ENCODE measurements at regions of chr2 and their contacts with region 1.

Region 1: GRCh38 chr2:14903709-14904374 is 271.3 kb downstream of the LRATD1 start:
- DNase-seq: peak; percentile 72
- ATAC-seq: peak; percentile 99
- H3K4me3 ChIP-seq: no peak overlapping the region
- H3K27ac ChIP-seq: no peak overlapping the region
- H3K4me1 ChIP-seq: no peaks in the 10 kb centered on the region
- H3K27me3 ChIP-seq: no peaks in the 10 kb centered on the region; a peak in 1 of 5 replicates
- CTCF ChIP-seq: peak; percentile 87
- EP300 ChIP-seq: no peak
- POLR2A ChIP-seq: no peak
- RAD21 ChIP-seq: peak; percentile 89

Region 2: GRCh38 chr2:14634201-14634884 is 269.5 kb before region 1 on chr2:
- CTCF ChIA-PET with region 1: no interaction called
- POLR2A ChIA-PET with region 1: no interaction called
- in situ Hi-C with region 1: no loop called
- intact Hi-C with region 1: loop called (anchors 10 kb)
- DNase-seq: peak; percentile 11
- ATAC-seq: peak; percentile 74
- H3K4me3 ChIP-seq: peak overlapping the region in 1 of 3 experiments; percentile 1; a peak in 2 of 6 replicates
- H3K27ac ChIP-seq: no peak overlapping the region
- H3K4me1 ChIP-seq: peaks cover 16% of the 10 kb centered on the region
- H3K27me3 ChIP-seq: peaks cover 13 to 41% of the 10 kb centered on the region in 2 experiments
- CTCF ChIP-seq: peak; percentile 72
- EP300 ChIP-seq: no peak
- POLR2A ChIP-seq: no peak
- RAD21 ChIP-seq: 0 out of 2 replicates have a peak, but pooled peaks have one; percentile 22

Region 3: GRCh38 chr2:14806613-14807012 is 97.2 kb before region 1 on chr2:
- CTCF ChIA-PET with region 1: no interaction called
- POLR2A ChIA-PET with region 1: no interaction called
- in situ Hi-C with region 1: no loop called
- intact Hi-C with region 1: no loop called
- DNase-seq: no peak
- ATAC-seq: no peak
- H3K4me3 ChIP-seq: no peak overlapping the region
- H3K27ac ChIP-seq: no peak overlapping the region
- H3K4me1 ChIP-seq: no peaks in the 10 kb centered on the region
- H3K27me3 ChIP-seq: no peaks in the 10 kb centered on the region
- CTCF ChIP-seq: no peak
- EP300 ChIP-seq: no peak
- POLR2A ChIP-seq: no peak
- RAD21 ChIP-seq: no peak

Measured in HepG2 (cell line).